Endothelial cell of umbilical vein (primary cell): ENCODE measurements at regions of chr2 and their contacts with region 1.

Region 1: GRCh38 chr2:215454519-215455246 is 18.8 kb upstream of the FN1 start:
- DNase-seq: peak; percentile 73
- H3K4me3 ChIP-seq: no peak overlapping the region
- H3K27ac ChIP-seq: no peak overlapping the region
- H3K4me1 ChIP-seq: peaks cover 2% of the 10 kb centered on the region
- H3K27me3 ChIP-seq: no peaks in the 10 kb centered on the region
- CTCF ChIP-seq: peak; percentile 69
- POLR2A ChIP-seq: no peak

Region 2: DNA sequence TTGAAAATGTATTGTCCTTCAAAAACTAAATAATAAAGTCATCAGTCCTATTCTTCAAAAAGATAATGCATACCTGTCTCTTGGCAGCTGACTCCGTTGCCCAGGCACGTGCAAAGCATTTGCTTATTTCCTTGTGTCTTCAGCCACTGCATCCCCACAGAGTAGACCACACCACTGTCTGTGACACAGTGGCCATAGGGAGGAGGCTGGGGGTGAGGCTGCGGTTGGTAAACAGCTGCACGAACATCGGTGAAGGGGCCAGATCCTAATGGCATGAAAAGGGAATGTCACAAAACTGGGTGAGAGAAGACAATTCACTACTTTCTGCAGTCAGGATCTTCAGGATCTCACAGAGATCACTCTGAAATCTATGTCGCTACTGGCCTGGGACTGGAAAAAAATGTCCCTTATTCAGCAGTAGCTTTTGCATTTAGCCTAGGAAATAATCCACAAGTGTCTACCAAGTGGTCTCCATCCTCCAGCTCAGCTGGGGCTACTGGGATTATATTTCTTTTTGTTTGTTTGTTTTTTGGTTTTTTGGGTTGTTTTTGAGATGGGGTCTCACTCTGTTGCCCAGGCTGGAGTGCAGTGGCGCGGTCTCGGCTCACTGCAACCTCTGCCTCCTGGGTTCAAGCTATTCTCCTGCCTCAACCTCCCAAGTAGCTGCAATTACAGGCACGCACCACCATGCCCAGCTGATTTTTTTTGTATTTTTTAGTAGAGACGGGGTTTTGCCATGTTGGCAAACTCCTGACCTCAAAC is 29.5 kb before region 1 on chr2:
- CTCF ChIA-PET with region 1: no interaction called
- POLR2A ChIA-PET with region 1: no interaction called
- dilution Hi-C with region 1: no loop called
- intact Hi-C with region 1: no loop called
- DNase-seq: no peak
- H3K4me3 ChIP-seq: no peak overlapping the region
- H3K27ac ChIP-seq: no peak overlapping the region
- H3K4me1 ChIP-seq: peaks cover 60% of the 10 kb centered on the region
- H3K27me3 ChIP-seq: no peaks in the 10 kb centered on the region
- CTCF ChIP-seq: no peak
- POLR2A ChIP-seq: peak; percentile 58

Region 3: GRCh38 chr2:215626812-215627281 is 172.2 kb after region 1 on chr2:
- CTCF ChIA-PET with region 1: interaction called, 5 read pairs
- POLR2A ChIA-PET with region 1: no interaction called
- dilution Hi-C with region 1: no loop called
- intact Hi-C with region 1: loop called (anchors 2 kb)
- DNase-seq: peak; percentile 79
- H3K4me3 ChIP-seq: peak overlapping the region in 1 of 3 experiments; percentile 27
- H3K27ac ChIP-seq: peak overlapping the region; percentile 91
- H3K4me1 ChIP-seq: peaks cover 33% of the 10 kb centered on the region
- H3K27me3 ChIP-seq: no peaks in the 10 kb centered on the region
- CTCF ChIP-seq: no peak
- POLR2A ChIP-seq: no peak

Region 4: DNA sequence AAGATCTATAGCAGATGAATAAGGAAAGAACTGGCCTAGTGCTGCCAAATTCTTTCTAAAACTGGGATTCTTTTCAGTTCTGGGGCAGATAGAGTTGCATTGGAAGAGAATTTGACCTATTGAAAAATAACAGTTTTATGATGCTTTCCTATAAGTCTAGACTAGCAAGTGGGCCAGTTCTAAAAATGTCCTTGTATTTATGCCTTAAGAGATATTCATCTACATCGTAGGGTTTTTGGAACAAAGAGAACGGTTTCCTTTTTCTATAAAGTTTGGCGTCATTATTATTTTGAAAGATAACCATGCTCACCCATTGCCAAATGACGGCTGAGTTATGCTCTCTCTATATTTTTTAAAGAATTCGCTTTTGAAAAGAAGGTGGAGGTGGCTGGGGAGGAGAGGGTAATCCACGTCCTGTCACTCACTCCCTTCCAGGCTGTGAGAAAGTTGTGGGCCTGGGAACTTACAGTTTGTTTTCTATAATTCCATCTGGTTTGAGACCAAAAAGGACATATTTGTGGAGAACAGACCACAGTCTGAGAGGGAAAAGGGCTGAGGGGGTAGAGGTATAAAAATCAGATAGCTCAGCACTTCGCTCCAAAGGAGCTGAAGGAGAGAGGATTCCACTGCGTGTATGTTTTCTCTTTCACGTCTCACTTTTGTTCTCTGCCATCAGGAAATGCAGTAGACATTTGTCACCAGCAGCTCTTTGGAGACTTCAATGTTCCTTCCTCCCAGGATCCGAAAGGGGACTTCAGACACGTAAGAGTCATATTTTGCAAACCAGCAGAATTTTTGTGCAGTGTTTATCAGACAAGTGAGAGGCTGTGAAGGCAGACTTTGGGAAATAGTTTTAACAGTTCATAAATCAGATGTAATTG is 263.1 kb after region 1 on chr2:
- CTCF ChIA-PET with region 1: interaction called, 3 read pairs
- POLR2A ChIA-PET with region 1: no interaction called
- dilution Hi-C with region 1: no loop called
- intact Hi-C with region 1: loop called (anchors 2 kb)
- DNase-seq: peak; percentile 88
- H3K4me3 ChIP-seq: peak overlapping the region in 1 of 3 experiments; percentile 28
- H3K27ac ChIP-seq: peak overlapping the region; percentile 92
- H3K4me1 ChIP-seq: peaks cover 45% of the 10 kb centered on the region
- H3K27me3 ChIP-seq: no peaks in the 10 kb centered on the region
- CTCF ChIP-seq: no peak
- POLR2A ChIP-seq: no peak

Region 5: DNA sequence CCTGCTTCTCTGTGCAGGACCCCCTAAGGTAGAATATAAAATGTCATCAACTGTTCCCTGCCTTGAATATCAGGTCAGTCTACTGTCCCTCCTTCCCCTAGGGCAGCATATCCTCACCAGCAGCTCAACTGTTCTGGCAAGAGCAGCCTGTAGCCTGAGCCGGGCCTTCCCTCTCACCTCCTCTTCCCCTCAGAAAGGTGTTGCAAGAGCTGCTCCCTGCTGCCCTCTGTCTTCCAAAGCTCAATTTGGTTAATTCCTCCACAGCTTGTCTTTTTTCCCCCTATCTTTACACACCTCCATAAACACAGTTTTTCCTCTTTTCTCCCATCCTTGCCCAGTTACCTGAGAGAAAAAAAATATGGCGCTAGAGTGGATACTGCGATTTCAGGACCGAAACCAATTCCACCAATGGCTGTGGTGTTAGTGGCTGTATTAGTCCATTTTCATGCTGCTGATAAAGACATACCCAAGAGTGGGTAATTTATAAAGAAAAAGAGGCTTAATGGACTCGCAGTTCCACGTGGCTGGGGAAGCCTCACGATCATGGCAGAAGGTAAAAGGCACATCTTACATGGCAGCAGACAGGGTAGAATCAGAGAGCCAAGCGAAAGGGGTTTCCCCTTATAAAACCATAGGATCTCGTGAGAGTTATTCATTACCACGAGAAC is 374.0 kb after region 1 on chr2:
- CTCF ChIA-PET with region 1: interaction called, 5 read pairs
- POLR2A ChIA-PET with region 1: no interaction called
- dilution Hi-C with region 1: no loop called
- intact Hi-C with region 1: loop called (anchors 1 kb)
- DNase-seq: peak; percentile 52
- H3K4me3 ChIP-seq: no peak overlapping the region
- H3K27ac ChIP-seq: no peak overlapping the region
- H3K4me1 ChIP-seq: peaks cover 47% of the 10 kb centered on the region
- H3K27me3 ChIP-seq: no peaks in the 10 kb centered on the region
- CTCF ChIP-seq: peak; percentile 49 to 62
- POLR2A ChIP-seq: no peak

Region 6: GRCh38 chr2:216259081-216259480 is 804.4 kb after region 1 on chr2:
- CTCF ChIA-PET with region 1: no interaction called
- POLR2A ChIA-PET with region 1: no interaction called
- dilution Hi-C with region 1: no loop called
- intact Hi-C with region 1: no loop called
- DNase-seq: no peak
- H3K4me3 ChIP-seq: no peak overlapping the region
- H3K27ac ChIP-seq: no peak overlapping the region
- H3K4me1 ChIP-seq: no peaks in the 10 kb centered on the region
- H3K27me3 ChIP-seq: no peaks in the 10 kb centered on the region
- CTCF ChIP-seq: no peak
- POLR2A ChIP-seq: no peak